Naive thymus-derived CD4-positive, alpha-beta T cell (primary cell): ENCODE measurements at regions of chrX and their contacts with region 1.

Region 1: GRCh38 chrX:76253432-76253831 is 80.6 kb downstream of the PBDC1 start:
- DNase-seq: peak; percentile 4 to 56 (median 26)
- ATAC-seq: peak; percentile 71
- H3K4me3 ChIP-seq: no peak overlapping the region
- H3K4me3 Mint-ChIP-seq: no peak overlapping the region
- H3K27ac ChIP-seq: no peak overlapping the region
- H3K27ac Mint-ChIP-seq: peak overlapping the region in 1 of 9 donors; percentile 11
- H3K4me1 ChIP-seq: no peaks in the 10 kb centered on the region
- H3K4me1 Mint-ChIP-seq: peaks cover 0 to 4% (median 0%) of the 10 kb centered on the region in 7 donors
- H3K27me3 ChIP-seq: no peaks in the 10 kb centered on the region
- H3K27me3 Mint-ChIP-seq: peaks cover 0 to 3% (median 0%) of the 10 kb centered on the region in 5 donors

Region 2: GRCh38 chrX:75038925-75039324 is 1214.5 kb before region 1 on chrX:
- CTCF ChIA-PET with region 1: no interaction called
- POLR2A ChIA-PET with region 1: no interaction called
- intact Hi-C with region 1: loop called (anchors 2 to 5 kb)
- DNase-seq: peak in 4 of 9 donors; percentile 0 to 23 (median 6)
- ATAC-seq: no peak
- H3K4me3 ChIP-seq: no peak overlapping the region
- H3K4me3 Mint-ChIP-seq: no peak overlapping the region
- H3K27ac ChIP-seq: no peak overlapping the region
- H3K27ac Mint-ChIP-seq: no peak overlapping the region
- H3K4me1 ChIP-seq: no peaks in the 10 kb centered on the region
- H3K4me1 Mint-ChIP-seq: no peaks in the 10 kb centered on the region
- H3K27me3 ChIP-seq: no peaks in the 10 kb centered on the region
- H3K27me3 Mint-ChIP-seq: no peaks in the 10 kb centered on the region

Region 3: DNA sequence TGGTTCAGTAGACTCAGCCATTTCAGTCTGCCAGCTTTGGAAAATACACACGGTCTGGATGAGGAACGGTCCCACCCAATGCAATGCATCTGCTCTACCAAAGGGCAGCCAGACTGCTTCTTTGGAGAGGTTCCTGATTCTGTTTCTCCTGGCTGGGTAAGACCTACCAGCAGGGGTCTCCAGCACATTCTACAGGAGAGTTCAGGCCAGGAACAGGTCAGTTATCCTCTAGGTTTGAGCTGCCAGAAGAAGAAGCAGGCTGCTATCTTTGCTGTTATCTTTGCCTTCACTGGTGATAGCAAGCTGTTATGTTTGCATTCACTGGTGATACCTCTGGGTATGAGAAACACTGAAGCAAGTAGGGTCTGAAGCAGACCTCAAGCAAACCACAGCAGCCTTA is 126.1 kb before region 1 on chrX:
- CTCF ChIA-PET with region 1: no interaction called
- POLR2A ChIA-PET with region 1: no interaction called
- intact Hi-C with region 1: loop called in 1 of 2 experiments (anchors 1 kb)
- DNase-seq: no peak
- ATAC-seq: no peak
- H3K4me3 ChIP-seq: no peak overlapping the region
- H3K4me3 Mint-ChIP-seq: no peak overlapping the region
- H3K27ac ChIP-seq: no peak overlapping the region
- H3K27ac Mint-ChIP-seq: no peak overlapping the region
- H3K4me1 ChIP-seq: no peaks in the 10 kb centered on the region
- H3K4me1 Mint-ChIP-seq: no peaks in the 10 kb centered on the region
- H3K27me3 ChIP-seq: no peaks in the 10 kb centered on the region
- H3K27me3 Mint-ChIP-seq: peaks cover 0 to 10% (median 4%) of the 10 kb centered on the region in 5 donors

Region 4: GRCh38 chrX:76148753-76149152 is 104.7 kb before region 1 on chrX:
- CTCF ChIA-PET with region 1: no interaction called
- POLR2A ChIA-PET with region 1: no interaction called
- intact Hi-C with region 1: loop called (anchors 5 kb)
- DNase-seq: peak in 8 of 9 donors; percentile 25 to 77 (median 63)
- ATAC-seq: peak; percentile 45
- H3K4me3 ChIP-seq: peak overlapping the region; percentile 32
- H3K4me3 Mint-ChIP-seq: peak overlapping the region; percentile 78 to 98 (median 88)
- H3K27ac ChIP-seq: peak overlapping the region; percentile 78
- H3K27ac Mint-ChIP-seq: peak overlapping the region; percentile 93 to 100 (median 99)
- H3K4me1 ChIP-seq: peaks cover 8 to 14% of the 10 kb centered on the region in 2 donors
- H3K4me1 Mint-ChIP-seq: peaks cover 2 to 29% (median 17%) of the 10 kb centered on the region in 7 donors
- H3K27me3 ChIP-seq: no peaks in the 10 kb centered on the region
- H3K27me3 Mint-ChIP-seq: no peaks in the 10 kb centered on the region

Region 5: DNA sequence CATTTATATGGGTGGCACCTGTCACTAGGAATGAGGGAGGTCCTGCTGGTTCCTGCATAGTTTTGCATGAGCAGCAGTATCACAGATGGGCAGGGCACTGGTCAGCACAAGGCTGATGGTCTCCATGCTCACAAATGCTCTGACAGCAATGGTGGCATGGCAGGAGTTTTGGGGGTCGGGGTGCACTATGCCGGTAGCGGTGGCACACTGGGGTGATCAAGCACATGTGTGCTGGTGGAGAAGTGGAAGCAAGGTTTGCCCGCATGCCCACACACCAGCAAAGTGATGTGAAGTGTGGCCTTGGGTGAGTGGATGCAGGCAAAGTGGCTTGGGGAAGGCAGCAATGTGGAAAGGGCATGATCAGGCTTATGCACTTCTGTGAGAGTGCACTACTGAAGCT is 113.5 kb after region 1 on chrX:
- CTCF ChIA-PET with region 1: no interaction called
- POLR2A ChIA-PET with region 1: no interaction called
- intact Hi-C with region 1: no loop called
- DNase-seq: no peak
- ATAC-seq: no peak
- H3K4me3 ChIP-seq: no peak overlapping the region
- H3K4me3 Mint-ChIP-seq: no peak overlapping the region
- H3K27ac ChIP-seq: no peak overlapping the region
- H3K27ac Mint-ChIP-seq: no peak overlapping the region
- H3K4me1 ChIP-seq: no peaks in the 10 kb centered on the region
- H3K4me1 Mint-ChIP-seq: no peaks in the 10 kb centered on the region
- H3K27me3 ChIP-seq: no peaks in the 10 kb centered on the region
- H3K27me3 Mint-ChIP-seq: peaks cover 0 to 9% (median 0%) of the 10 kb centered on the region in 5 donors